Endothelial cell of umbilical vein (primary cell): ENCODE measurements at regions of chr16 and their contacts with region 1.

Region 1: DNA sequence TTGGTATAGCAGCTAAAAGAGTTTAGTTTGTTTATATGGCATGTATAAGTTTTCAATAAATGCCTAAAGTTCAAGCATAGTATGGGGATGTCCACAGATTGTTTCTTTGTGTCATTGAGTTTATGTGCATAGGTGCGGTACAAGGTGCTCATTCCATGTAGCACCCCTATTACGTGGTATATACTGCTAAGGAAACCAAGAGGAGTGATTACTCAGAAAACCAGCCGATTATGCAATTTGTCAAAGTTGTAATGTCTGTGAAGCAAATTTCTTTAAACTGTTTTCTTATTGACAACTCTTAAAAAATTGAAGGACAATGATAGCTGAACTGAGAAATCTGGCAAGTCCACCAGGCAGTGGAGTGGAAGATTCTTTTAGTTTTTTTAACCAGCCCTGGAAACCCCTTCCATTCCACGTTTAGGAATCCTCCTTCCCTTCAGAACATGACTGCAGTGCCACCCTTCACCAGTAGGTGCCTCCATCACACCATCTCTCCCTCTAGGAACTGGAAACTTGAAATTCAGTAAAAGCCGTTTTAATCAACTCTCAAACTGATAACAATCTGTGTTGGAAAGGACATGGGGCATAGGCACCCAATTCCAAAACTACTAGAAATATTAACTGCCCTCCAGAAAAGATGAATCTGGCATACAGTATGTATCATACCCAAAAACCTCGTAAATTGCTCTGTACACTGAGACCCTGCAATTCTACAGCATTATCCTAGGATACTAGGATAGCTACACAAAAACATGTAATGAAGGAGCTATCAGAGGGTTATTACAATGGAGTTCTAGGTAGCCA is 43.5 kb downstream of the REXO5 start:
- DNase-seq: peak; percentile 81
- H3K4me3 ChIP-seq: no peak overlapping the region
- H3K27ac ChIP-seq: no peak overlapping the region
- H3K4me1 ChIP-seq: peaks cover 42% of the 10 kb centered on the region
- H3K27me3 ChIP-seq: no peaks in the 10 kb centered on the region
- CTCF ChIP-seq: peak; percentile 88 to 96
- POLR2A ChIP-seq: peak; percentile 3

Region 2: GRCh38 chr16:20774703-20775362 is 75.0 kb before region 1 on chr16:
- CTCF ChIA-PET with region 1: interaction called, 3 read pairs
- POLR2A ChIA-PET with region 1: no interaction called
- dilution Hi-C with region 1: no loop called
- intact Hi-C with region 1: loop called (anchors 2 kb)
- DNase-seq: peak; percentile 70
- H3K4me3 ChIP-seq: no peak overlapping the region
- H3K27ac ChIP-seq: no peak overlapping the region
- H3K4me1 ChIP-seq: no peaks in the 10 kb centered on the region
- H3K27me3 ChIP-seq: peaks cover 0 to 1% of the 10 kb centered on the region in 2 experiments
- CTCF ChIP-seq: peak; percentile 85 to 94
- POLR2A ChIP-seq: no peak

Region 3: DNA sequence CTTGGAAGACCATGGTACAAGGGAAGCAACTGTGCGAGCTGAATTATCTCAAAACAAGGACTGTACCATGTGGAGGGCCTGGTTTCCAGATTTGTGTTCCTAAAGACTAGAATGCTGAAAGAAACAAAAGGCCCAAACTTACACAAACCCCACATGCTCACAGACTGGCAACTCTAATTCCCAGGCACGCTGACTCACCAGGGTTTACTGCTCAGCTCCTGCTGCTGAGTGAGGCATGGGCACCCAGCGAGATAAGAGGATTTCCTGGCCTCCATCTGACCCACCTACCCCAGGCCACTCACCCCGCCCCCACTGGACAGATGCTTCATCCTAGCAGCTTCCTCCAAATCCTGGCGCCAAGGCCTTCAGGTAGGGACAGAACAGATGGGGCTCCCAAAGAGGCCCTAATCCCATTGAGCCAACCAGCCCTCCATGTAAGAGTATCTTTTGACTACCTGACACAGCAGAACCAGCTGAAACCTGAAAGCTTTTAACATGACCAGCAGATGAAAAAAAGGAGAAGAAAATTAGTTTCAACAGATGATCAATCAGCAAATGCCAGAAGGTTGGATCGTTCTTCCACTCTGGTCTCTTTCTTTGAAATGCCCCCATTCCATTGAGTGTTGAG is 16.5 kb after region 1 on chr16:
- CTCF ChIA-PET with region 1: interaction called, 37 read pairs
- POLR2A ChIA-PET with region 1: interaction called, 3 read pairs
- dilution Hi-C with region 1: no loop called
- intact Hi-C with region 1: loop called (anchors 1 kb)
- DNase-seq: peak; percentile 90
- H3K4me3 ChIP-seq: no peak overlapping the region
- H3K27ac ChIP-seq: peak overlapping the region; percentile 97
- H3K4me1 ChIP-seq: peaks cover 55% of the 10 kb centered on the region
- H3K27me3 ChIP-seq: no peaks in the 10 kb centered on the region
- CTCF ChIP-seq: no peak
- POLR2A ChIP-seq: peak; percentile 42

Region 4: GRCh38 chr16:20944861-20945574 is 95.2 kb after region 1 on chr16:
- CTCF ChIA-PET with region 1: interaction called, 4 read pairs
- POLR2A ChIA-PET with region 1: no interaction called
- dilution Hi-C with region 1: no loop called
- intact Hi-C with region 1: loop called (anchors 2 kb)
- DNase-seq: peak; percentile 18
- H3K4me3 ChIP-seq: no peak overlapping the region
- H3K27ac ChIP-seq: no peak overlapping the region
- H3K4me1 ChIP-seq: no peaks in the 10 kb centered on the region
- H3K27me3 ChIP-seq: no peaks in the 10 kb centered on the region
- CTCF ChIP-seq: no peak
- POLR2A ChIP-seq: no peak

Region 5: DNA sequence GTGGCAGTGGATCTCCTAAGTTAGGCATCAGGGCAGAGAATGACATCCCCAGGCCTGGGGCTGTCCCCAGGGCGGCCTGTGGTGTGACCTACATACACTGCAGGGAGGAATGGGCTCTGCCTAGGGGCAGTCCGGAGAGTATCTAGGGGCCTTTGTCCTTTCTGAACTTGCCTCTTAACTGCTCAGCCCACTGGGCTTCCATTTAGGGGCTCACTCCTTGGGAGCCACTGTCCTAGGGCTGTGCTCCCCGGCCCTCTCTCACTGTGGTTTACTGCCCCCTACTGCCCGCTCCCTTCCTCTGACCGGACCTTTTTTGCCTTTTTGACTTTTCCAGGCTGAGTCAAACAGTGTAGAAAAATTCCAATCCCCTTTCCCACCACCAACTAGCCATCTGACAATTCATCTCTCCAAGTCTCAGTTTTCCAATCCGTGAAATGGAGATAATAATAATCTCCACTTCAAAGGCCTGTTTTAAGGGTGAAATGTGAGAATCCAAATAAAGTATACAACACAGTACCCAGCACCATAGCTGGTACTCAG is 234.0 kb after region 1 on chr16:
- CTCF ChIA-PET with region 1: interaction called, 73 read pairs
- POLR2A ChIA-PET with region 1: no interaction called
- dilution Hi-C with region 1: no loop called
- intact Hi-C with region 1: loop called (anchors 1 kb)
- DNase-seq: peak; percentile 66
- H3K4me3 ChIP-seq: no peak overlapping the region
- H3K27ac ChIP-seq: no peak overlapping the region
- H3K4me1 ChIP-seq: no peaks in the 10 kb centered on the region
- H3K27me3 ChIP-seq: peaks cover 0 to 2% of the 10 kb centered on the region in 2 experiments
- CTCF ChIP-seq: peak; percentile 71 to 83
- POLR2A ChIP-seq: no peak

Region 6: DNA sequence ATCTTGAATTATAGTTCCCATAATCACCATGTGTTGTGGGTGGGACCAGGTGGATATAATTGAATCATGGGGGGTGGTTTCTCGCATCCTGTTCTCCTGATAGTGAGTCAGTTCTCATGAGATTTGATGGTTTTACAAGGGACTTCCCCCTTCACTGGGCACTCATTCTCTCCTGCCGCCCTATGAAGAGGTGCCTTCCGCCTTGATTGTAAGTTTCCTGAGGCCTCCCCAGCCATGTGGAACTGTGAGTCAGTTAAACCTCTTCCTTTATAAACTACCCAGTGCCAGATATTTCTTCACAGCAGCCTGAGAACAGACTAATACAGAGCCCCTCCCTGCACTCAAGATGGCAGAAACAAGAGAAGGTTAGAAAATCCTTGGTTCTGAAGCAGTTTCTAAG is 335.0 kb after region 1 on chr16:
- CTCF ChIA-PET with region 1: interaction called, 4 read pairs
- POLR2A ChIA-PET with region 1: no interaction called
- dilution Hi-C with region 1: no loop called
- intact Hi-C with region 1: loop called (anchors 1 kb)
- DNase-seq: no peak
- H3K4me3 ChIP-seq: no peak overlapping the region
- H3K27ac ChIP-seq: no peak overlapping the region
- H3K4me1 ChIP-seq: peaks cover 11% of the 10 kb centered on the region
- H3K27me3 ChIP-seq: no peaks in the 10 kb centered on the region
- CTCF ChIP-seq: no peak
- POLR2A ChIP-seq: no peak